Sciatic nerve (tissue), 2 donors: ENCODE measurements at regions of chr11 and their contacts with region 1.

Region 1: DNA sequence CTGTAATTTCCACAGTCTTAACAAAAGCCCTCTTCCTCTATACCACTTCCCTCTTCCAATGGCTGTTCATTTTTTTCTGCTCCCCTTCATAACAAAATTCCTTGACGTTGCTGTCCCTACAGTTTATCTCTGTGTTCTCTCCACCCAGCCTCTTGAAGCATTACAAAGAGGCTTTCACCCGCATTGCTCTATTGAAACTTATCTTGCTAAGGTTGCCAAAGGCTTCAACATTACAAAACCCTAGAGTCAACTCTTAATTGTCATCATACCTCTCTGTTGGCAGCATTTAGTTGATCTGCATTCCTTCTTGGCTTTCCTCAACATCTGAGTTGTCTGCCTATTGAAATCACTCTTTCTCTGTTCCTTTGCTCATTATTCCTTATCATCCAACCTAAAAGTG is 1055.7 kb downstream of the JRKL start:
- DNase-seq: no peak
- ATAC-seq: no peak

Region 2: GRCh38 chr11:96863520-96863919 is 582.0 kb before region 1 on chr11:
- intact Hi-C with region 1: loop called (anchors 5 kb)
- DNase-seq: no peak
- ATAC-seq: peak; percentile 38

Region 3: DNA sequence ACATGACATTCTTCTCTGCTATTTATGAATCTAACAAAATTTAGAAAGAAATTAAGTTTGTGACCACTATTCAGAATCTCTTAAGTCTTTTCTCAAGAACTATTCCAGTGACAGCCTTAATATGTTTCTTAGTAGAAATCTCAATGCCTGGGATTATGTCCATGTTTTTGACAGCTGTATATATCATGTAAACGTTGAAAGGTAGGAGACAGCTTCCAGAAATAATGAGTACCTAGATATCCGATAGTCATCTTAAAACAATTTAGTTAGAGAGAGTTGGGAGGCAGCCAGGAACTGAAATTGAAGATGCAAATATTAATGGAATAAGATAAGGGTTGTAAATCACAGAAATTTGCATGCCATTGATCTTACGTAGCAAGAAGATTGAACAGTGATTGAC is 100.6 kb before region 1 on chr11:
- intact Hi-C with region 1: no loop called
- DNase-seq: no peak
- ATAC-seq: no peak

Region 4: DNA sequence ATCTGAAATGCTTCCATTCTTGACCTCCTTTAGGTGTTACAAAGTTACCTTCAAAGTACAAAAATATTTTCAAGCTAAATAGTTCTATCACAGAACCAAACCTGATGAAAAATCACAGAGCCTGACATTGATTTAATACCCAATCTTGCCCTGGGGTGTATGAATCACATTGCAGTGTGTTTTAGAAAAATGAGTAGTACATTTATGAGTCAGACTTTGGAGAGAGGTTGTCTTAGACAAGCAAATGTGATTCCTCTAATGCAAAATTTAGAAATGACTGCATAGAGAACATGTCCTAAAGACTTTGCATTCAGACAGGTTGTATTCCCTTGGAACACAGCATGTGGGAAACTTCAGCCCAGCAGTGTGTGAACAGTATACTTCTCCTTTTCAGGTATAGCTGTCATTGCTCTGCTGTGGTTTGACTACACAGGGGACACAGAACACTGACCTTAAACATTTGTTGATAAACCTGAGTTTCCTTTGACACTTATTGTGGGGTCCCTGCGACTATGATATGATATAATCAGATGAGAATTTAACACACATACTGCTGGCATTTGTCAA is 83.7 kb before region 1 on chr11:
- intact Hi-C with region 1: no loop called
- DNase-seq: no peak
- ATAC-seq: no peak

Region 5: DNA sequence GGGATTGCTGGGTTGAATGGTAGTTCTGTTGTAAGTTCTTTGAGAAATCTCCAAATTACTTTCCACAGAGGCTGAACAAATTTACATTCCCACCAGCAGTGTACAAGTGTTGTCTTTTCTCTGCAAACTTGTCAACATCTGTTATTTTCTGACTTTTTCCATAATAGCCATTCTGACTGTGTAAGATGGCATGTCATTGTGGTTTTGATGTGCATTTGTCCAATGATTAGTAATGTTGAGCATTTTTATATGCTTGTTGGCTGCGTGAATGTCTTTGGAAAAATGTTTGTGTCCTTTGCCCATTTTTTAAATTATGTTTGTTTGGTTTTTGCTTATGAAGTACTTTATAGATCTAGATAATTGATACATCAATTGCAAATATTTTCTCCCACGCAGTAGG is 30.8 kb before region 1 on chr11:
- intact Hi-C with region 1: no loop called
- DNase-seq: no peak
- ATAC-seq: no peak